Lower leg skin (tissue), 4 donors: ENCODE measurements at regions of chr9 and their contacts with region 1.

Region 1: GRCh38 chr9:133635533-133636461 is at the start of gene DBH:
- DNase-seq: no peak
- H3K4me3 ChIP-seq: no peak within 1 kb of the TSS
- CTCF ChIP-seq: no peak
- POLR2A ChIP-seq: no peak
- total RNA-seq, gene DBH: 0.06 TPM in 1 of 4 donors, not detected in the others

Region 2: DNA sequence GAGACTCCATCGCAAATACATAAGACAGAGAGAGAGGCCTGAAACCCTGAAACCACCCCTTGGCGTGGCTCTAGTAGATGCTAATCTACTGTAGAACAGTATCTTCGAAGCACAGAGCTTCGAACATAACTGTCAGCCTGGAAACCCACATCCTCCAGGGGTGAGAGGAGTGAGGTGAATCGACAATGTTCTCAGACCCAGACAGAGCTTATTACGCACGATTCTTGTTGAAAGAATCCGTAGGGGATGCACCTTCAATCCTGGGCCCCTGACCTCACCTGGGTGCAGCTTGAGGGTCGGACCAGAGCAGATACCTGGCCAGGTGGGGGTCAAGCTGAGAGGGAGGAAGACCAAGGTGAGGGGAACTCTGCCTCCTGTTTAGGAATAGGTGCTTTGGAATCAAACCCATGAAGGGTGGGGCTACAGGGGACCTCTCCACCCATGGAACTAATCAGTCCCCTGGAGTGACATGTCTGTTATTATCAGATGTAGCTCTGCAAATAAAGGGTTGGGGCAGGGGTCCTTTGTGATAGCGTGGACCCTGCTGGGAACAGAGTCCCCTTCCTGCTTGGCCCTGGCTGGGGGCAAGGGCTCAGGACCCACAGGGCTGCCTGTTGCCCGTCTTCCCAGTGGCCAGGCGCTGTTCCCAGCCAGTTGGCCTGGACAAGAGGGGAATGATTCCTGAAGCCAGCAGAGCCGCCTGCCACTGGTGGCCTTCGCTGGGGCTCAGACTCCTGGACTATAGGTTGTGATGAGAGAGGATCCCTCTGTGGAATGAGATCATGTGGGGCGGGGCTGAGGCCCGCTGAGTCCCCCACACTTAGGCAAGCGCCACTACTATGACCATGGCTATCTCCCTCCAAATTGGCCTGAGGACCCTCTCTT is 41.6 kb after region 1 on chr9:
- intact Hi-C with region 1: loop called (anchors 2 kb)
- DNase-seq: no peak
- H3K4me3 ChIP-seq: no peak overlapping the region
- CTCF ChIP-seq: no peak
- POLR2A ChIP-seq: no peak

Region 3: GRCh38 chr9:133782157-133783130 is 146.6 kb after region 1 on chr9:
- intact Hi-C with region 1: no loop called
- DNase-seq: peak in 1 of 2 donors; percentile 56
- H3K4me3 ChIP-seq: no peak overlapping the region
- CTCF ChIP-seq: no peak
- POLR2A ChIP-seq: no peak